AG04450 (cell line): ENCODE measurements at regions of chr14 and their contacts with region 1.

Region 1: DNA sequence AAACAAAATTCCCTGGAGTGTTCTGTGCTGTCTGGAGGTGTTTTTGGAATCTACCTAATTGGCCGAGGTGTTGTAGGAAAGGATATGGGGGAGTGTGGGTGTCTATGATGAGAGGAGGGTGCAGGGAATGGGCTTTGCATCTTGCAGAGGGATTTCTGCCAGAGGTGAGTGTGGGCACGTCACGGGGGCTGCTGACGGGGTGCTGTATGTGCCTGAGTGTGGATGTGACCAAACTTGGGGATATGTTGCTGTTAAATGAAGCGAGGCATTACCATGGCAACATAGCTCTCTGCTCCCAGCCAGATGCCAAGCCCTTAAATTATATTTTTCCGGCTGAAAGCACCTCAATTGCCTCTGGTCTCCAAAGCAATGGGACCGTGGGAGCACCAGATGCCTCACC is 44.3 kb upstream of the SPTLC2 start:
- DNase-seq: no peak
- H3K4me3 ChIP-seq: no peak overlapping the region
- H3K27ac ChIP-seq: no peak overlapping the region
- H3K27me3 ChIP-seq: peaks cover 2% of the 10 kb centered on the region
- CTCF ChIP-seq: no peak

Region 2: DNA sequence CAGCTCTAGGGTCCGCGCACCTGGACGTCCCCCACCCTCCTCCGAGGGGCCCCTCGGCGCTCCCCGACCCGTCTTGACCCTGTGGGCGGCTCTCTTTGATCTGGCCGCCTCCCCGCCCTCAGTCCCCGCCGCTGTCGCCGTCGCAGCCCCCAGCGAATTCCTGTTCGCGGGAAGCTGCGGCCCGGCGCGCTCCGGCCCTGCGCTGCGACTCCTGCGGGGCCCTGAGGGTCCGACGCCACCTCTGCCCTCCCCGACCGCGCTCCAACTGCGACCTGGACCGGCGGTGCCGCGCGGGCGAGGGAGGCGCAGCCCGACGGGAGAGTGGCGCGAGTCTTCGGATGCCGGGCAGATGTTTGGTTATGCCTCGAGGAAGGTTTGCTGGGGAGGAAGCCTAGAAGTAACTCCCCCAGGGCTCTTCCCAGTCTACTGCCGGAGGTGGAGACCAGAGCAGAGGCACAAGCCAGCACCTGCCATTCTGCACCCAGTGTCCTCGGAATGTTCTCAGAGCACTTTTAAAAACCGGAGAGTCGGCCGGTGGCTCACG is 161.7 kb before region 1 on chr14:
- CTCF ChIA-PET with region 1: no interaction called
- POLR2A ChIA-PET with region 1: no interaction called
- DNase-seq: no peak
- H3K4me3 ChIP-seq: peak overlapping the region; percentile 56; the same call in 1 of the 2 replicates
- H3K27ac ChIP-seq: no peak overlapping the region
- H3K27me3 ChIP-seq: peaks cover 25% of the 10 kb centered on the region
- CTCF ChIP-seq: no peak

Region 3: DNA sequence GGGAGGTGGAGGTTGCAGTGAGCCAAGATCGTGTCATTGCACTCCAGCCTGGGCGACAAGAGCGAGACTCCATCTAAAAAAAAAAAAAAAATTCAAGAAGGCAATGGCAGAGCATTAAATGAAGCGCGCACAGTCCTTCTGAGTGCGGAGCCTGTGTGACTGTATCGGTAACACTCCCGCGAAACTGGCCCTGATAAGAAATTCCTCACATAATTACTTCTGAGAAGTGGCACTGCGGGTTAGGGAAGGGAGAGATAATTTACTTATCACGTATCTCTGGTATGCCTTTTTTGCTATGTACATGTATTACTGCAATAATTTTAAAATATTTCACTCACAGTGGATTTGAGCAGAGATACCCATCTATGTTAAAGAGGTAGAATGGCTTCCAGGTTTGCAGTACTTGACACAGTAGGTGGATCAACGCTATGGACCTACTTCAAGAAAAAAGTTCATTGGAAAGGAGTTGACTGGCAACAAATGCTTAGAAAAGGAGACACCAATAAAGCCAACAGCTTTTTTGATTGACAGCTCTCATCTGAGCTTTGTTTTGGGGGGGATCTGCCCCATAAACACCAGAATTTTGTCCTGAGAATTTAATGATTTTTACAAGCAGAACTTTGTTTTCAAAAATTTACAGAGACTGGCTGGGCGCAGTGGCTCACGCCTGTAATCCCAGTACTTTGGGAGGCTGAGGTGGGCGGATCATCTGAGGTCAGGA is 15.1 kb before region 1 on chr14:
- CTCF ChIA-PET with region 1: interaction called, 13 read pairs
- POLR2A ChIA-PET with region 1: interaction called, 3 read pairs
- DNase-seq: no peak
- H3K4me3 ChIP-seq: no peak overlapping the region
- H3K27ac ChIP-seq: no peak overlapping the region
- H3K27me3 ChIP-seq: no peaks in the 10 kb centered on the region
- CTCF ChIP-seq: no peak

Region 4: DNA sequence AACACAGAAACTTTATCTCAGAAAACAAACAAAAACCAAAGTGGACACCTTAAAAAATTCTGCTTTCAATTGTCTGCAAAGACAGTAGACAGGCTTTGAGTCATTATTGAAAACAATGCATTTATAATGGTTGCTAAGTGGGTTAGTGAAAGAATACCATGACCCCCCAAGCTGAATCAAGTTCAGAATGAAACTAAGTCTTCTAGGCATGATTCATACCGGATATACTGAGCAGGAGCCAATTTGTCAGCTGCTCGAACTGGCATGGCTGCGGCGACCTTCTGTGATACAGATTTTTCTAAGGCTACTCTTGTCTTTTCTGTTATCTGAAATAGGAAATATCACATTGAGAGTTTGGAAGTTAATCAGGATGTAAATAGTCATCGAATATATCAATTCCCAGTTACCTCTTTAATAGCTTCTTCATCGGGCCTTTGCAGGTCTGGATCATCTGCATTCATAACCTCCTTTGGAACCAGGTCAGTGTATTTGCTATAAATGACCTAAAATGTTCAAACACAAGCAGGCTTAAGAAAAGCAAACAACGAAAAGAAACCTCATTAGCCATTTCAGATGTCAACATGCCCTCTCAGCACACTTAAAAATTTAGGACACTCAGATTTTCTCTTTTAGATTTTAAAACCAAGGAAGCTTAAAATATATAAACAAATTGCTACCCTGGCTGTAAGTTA is 78.0 kb after region 1 on chr14:
- CTCF ChIA-PET with region 1: no interaction called
- POLR2A ChIA-PET with region 1: no interaction called
- DNase-seq: no peak
- H3K4me3 ChIP-seq: no peak overlapping the region
- H3K27ac ChIP-seq: no peak overlapping the region
- H3K27me3 ChIP-seq: no peaks in the 10 kb centered on the region
- CTCF ChIP-seq: no peak